PC-9 (cell line): ENCODE measurements at regions of chr2 and their contacts with region 1.

Region 1: DNA sequence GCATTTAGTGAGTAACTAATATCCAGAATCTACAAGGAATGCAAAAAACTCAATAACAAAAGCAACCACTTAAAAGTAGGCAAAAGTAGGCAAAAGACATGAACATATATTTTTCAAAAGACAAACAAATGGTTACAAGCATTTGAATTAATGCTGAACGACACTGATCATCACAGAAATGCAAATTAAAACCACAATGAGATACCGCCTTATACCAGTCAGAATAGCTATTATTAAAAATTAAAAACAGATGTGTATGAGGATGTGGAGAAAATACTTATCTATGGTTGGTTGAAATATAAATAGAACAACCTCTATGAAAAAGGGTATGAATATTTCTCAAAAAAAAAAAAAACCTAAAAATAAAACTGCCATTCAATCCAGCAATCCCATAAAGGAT is 51.7 kb downstream of the SNTG2 start:
- DNase-seq: no peak
- H3K4me3 ChIP-seq: no peak overlapping the region
- H3K27ac ChIP-seq: no peak overlapping the region
- H3K4me1 ChIP-seq: no peaks in the 10 kb centered on the region
- H3K27me3 ChIP-seq: no peaks in the 10 kb centered on the region
- CTCF ChIP-seq: no peak

Region 2: DNA sequence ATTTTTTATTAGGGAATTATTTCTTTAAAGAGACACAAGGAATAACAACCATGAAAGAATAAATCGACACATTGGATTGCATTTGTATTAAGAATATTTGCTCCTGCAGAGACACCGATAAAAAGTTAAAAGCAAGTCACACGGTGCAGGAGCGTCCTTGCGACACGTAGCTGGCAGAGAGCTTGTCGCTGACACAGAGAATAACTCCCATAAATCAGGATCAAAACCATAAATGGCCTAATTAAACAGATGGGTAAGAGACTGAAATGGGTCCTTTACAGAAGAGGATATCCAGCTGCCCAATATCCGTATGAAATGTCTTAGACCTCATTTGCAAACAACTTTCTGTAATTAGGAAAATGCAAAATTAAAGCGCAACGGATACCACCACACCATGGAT is 177.8 kb before region 1 on chr2:
- CTCF ChIA-PET with region 1: interaction called, 11 read pairs
- POLR2A ChIA-PET with region 1: no interaction called
- intact Hi-C with region 1: no loop called
- DNase-seq: no peak
- H3K4me3 ChIP-seq: no peak overlapping the region
- H3K27ac ChIP-seq: no peak overlapping the region
- H3K4me1 ChIP-seq: no peaks in the 10 kb centered on the region
- H3K27me3 ChIP-seq: peaks cover 94% of the 10 kb centered on the region
- CTCF ChIP-seq: no peak